HAP-1 (cell line): ENCODE measurements at regions of chr18 and their contacts with region 1.

Region 1: GRCh38 chr18:47772374-47773248 is 157.8 kb downstream of the SMAD2 start:
- DNase-seq: peak; percentile 72 to 88
- H3K4me3 ChIP-seq: no peak overlapping the region
- H3K4me1 ChIP-seq: no peaks in the 10 kb centered on the region
- H3K27me3 ChIP-seq: 0 out of 2 replicates have a peak, but pooled peaks cover 9% of the 10 kb centered on the region

Region 2: GRCh38 chr18:47701133-47701532 is 71.5 kb before region 1 on chr18:
- in situ Hi-C with region 1: no loop called
- DNase-seq: no peak
- H3K4me3 ChIP-seq: no peak overlapping the region
- H3K4me1 ChIP-seq: no peaks in the 10 kb centered on the region
- H3K27me3 ChIP-seq: peaks cover 3% of the 10 kb centered on the region; the same call in 1 of the 2 replicates

Region 3: GRCh38 chr18:48022531-48023329 is 250.1 kb after region 1 on chr18:
- in situ Hi-C with region 1: loop called (anchors 5 kb)
- DNase-seq: peak; percentile 50 to 70
- H3K4me3 ChIP-seq: no peak overlapping the region
- H3K4me1 ChIP-seq: no peaks in the 10 kb centered on the region
- H3K27me3 ChIP-seq: peaks cover 8% of the 10 kb centered on the region; the same call in 1 of the 2 replicates